HEK293 (cell line): ENCODE measurements at regions of chr19 and their contacts with region 1.

Region 1: GRCh38 chr19:47065242-47065641 is 16.8 kb upstream of the TMEM160 start:
- H3K4me3 ChIP-seq: no peak overlapping the region
- H3K27ac ChIP-seq: no peak overlapping the region
- H3K4me1 ChIP-seq: no peaks in the 10 kb centered on the region
- CTCF ChIP-seq: no peak

Region 2: DNA sequence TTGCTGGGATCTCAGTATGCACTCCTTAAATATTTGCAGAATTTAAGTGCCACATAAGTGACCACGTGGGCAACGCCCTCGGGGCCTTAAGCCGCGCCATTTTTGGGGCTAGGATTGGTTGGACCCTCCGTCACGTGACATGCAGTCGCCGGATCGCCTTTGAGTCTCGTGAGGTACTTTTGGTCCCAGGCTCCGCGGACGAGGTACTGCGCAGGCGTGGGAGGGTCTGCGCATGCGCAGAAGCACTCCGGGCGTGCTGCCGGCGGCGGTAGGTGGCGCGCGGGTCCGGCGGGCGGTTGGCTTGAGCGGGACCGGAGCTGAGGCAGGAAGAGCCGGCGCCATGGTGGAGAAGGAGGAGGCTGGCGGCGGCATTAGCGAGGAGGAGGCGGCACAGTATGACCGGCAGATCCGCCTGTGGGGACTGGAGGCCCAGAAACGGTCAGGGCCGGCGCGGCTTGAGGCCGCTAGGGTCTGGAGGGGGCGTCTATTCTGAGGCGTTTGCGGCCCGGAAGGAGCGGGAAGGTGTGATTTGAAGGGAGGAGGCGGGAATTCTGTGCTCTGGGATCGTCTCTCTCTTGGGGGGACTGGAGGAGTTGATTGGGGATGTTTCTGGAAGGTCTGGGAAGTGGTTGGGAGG is 65.5 kb after region 1 on chr19 and contains the start of gene SAE1:
- CTCF ChIA-PET with region 1: no interaction called
- POLR2A ChIA-PET with region 1: no interaction called
- H3K4me3 ChIP-seq: peak within 1 kb of the TSS; percentile 75
- H3K27ac ChIP-seq: peak within 1 kb of the TSS; percentile 92
- H3K4me1 ChIP-seq: peaks cover 22% of the 10 kb centered on the region
- CTCF ChIP-seq: peak; percentile 97

Region 3: GRCh38 chr19:47141695-47142094 is 76.5 kb after region 1 on chr19:
- CTCF ChIA-PET with region 1: no interaction called
- POLR2A ChIA-PET with region 1: interaction called, 10 read pairs
- H3K4me3 ChIP-seq: no peak overlapping the region
- H3K27ac ChIP-seq: no peak overlapping the region
- H3K4me1 ChIP-seq: peaks cover 6% of the 10 kb centered on the region; the same call in 1 of the 2 replicates
- CTCF ChIP-seq: no peak